ENCODE measurements at regions of chr4 and their contacts with region 1.

Region 1: GRCh38 chr4:48008021-48008596 is 8.4 kb downstream of the CNGA1 start:
- DNase-seq: peak; percentile 21
- H3K4me3 ChIP-seq: no peak overlapping the region
- H3K27ac ChIP-seq: no peak overlapping the region
- H3K4me1 ChIP-seq: no peaks in the 10 kb centered on the region
- H3K27me3 ChIP-seq: no peaks in the 10 kb centered on the region
- CTCF ChIP-seq: no peak

Region 2: DNA sequence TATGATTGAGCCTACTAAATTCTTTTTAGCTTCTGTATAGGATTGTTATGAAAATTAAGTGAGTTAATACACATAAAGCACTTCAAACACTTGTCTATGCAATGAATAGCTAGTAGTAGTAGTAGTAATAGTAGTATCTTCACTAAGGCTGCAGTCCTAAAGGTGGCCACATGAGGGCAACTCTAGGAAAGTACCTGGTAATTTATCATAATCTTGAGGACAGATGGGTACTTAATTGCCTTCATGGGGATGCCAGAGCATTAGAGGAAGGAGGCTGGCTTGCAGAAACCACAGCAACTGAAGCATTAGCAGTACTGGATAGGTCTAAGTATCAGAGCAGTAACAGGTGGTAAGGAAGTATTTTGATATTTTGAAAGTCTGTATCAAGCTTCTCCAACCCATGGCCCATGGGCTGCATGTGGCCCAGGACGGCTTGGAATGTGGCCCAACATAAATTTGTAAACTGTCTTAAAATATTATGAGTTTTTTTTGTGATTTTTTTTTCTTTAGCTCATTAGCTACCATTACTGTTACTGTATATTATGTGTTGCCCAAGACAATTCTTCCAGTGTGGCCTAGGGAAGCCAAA is 25.8 kb after region 1 on chr4:
- CTCF ChIA-PET with region 1: no interaction called
- dilution Hi-C with region 1: no loop called
- in situ Hi-C with region 1: no loop called
- intact Hi-C with region 1: no loop called
- DNase-seq: peak; percentile 34
- H3K4me3 ChIP-seq: no peak overlapping the region
- H3K27ac ChIP-seq: no peak overlapping the region
- H3K4me1 ChIP-seq: no peaks in the 10 kb centered on the region
- H3K27me3 ChIP-seq: no peaks in the 10 kb centered on the region
- CTCF ChIP-seq: peak; percentile 73 to 76

Region 3: GRCh38 chr4:48109413-48110263 is 101.5 kb after region 1 on chr4:
- CTCF ChIA-PET with region 1: no interaction called
- dilution Hi-C with region 1: no loop called
- in situ Hi-C with region 1: loop called in 1 of 2 experiments (anchors 25 kb)
- intact Hi-C with region 1: loop called (anchors 1 kb)
- DNase-seq: peak; percentile 54
- H3K4me3 ChIP-seq: no peak overlapping the region
- H3K27ac ChIP-seq: no peak overlapping the region
- H3K4me1 ChIP-seq: peaks cover 11% of the 10 kb centered on the region
- H3K27me3 ChIP-seq: no peaks in the 10 kb centered on the region
- CTCF ChIP-seq: peak; percentile 66 to 82

Region 4: GRCh38 chr4:48360285-48361010 is 352.3 kb after region 1 on chr4:
- CTCF ChIA-PET with region 1: no interaction called
- dilution Hi-C with region 1: no loop called
- in situ Hi-C with region 1: no loop called
- intact Hi-C with region 1: no loop called
- DNase-seq: peak; percentile 84
- H3K4me3 ChIP-seq: no peak overlapping the region
- H3K27ac ChIP-seq: peak overlapping the region; percentile 60
- H3K4me1 ChIP-seq: peaks cover 16% of the 10 kb centered on the region
- H3K27me3 ChIP-seq: no peaks in the 10 kb centered on the region
- CTCF ChIP-seq: no peak